ENCODE measurements at regions of chr1 and their contacts with region 1.

Region 1: GRCh38 chr1:232630047-232630893 is at the start of gene SIPA1L2:
- DNase-seq: peak; percentile 97
- H3K4me3 Mint-ChIP-seq: peak within 1 kb of the TSS; percentile 97
- H3K27ac Mint-ChIP-seq: peak within 1 kb of the TSS; percentile 76
- H3K4me1 Mint-ChIP-seq: peaks cover 33% of the 10 kb centered on the region
- H3K27me3 Mint-ChIP-seq: no peaks in the 10 kb centered on the region
- CTCF ChIP-seq: peak; percentile 72
- total RNA-seq, gene SIPA1L2: 15.2 and 18.3 TPM in 2 replicates

Region 2: DNA sequence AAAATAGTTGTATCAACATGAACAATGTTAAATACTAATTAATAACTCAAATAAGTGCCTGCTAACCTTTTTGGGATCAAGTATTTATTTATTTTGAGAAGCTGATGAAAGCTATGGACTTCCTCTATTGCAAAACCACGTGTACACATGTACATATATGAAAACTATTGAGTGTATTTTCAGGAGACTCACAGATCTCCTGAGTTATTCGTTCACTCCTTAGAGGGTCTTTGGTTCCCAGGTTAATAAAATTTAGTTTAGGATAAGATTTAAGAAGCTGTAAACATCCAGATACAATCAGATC is 873.2 kb before region 1 on chr1:
- CTCF ChIA-PET with region 1: interaction called, 60 read pairs
- POLR2A ChIA-PET with region 1: interaction called, 11 read pairs
- intact Hi-C with region 1: loop called (anchors 1 kb)
- DNase-seq: no peak
- H3K4me3 Mint-ChIP-seq: no peak overlapping the region
- H3K27ac Mint-ChIP-seq: peak overlapping the region; percentile 57
- H3K4me1 Mint-ChIP-seq: no peaks in the 10 kb centered on the region
- H3K27me3 Mint-ChIP-seq: no peaks in the 10 kb centered on the region
- CTCF ChIP-seq: no peak

Region 3: DNA sequence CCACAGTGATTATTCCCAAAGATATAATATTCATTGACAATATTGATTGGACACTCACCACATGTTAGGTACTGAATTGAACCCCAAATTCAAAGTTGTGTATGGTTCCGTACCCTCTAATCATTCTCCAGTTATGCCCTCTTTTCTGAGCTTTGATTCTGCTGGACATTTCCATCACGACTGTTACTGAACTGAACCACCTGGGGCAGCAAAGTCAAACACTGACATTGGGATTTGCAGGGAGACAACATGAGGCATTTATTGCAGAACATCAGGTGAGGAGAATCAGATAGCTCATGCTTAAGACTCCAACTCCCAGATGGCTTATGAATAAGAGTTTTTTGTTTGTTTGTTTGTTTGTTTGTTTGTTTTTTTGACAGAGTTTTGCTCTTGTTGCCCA is 582.8 kb before region 1 on chr1:
- CTCF ChIA-PET with region 1: interaction called, 4 read pairs
- POLR2A ChIA-PET with region 1: no interaction called
- intact Hi-C with region 1: loop called (anchors 5 kb)
- DNase-seq: peak; percentile 53
- H3K4me3 Mint-ChIP-seq: no peak overlapping the region
- H3K27ac Mint-ChIP-seq: no peak overlapping the region
- H3K4me1 Mint-ChIP-seq: peaks cover 6% of the 10 kb centered on the region
- H3K27me3 Mint-ChIP-seq: no peaks in the 10 kb centered on the region
- CTCF ChIP-seq: peak; percentile 22

Region 4: DNA sequence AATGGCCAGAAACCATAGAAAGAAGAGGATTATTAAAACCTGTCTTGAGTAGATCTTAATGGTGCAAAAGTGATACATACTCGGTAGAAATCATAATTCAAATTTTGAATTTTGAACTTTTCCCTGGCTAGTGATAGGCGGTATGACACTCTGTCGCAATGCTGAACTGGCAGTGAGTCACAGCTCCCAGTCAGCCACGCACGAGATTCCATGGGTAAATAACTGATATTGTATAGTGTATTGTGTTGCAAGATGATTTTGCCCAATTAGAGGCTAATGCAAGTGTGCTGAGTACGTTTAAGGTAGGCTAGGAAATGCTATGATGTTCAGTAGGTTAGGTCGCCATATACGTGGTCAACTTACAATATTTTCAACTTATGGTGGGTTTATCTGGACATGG is 207.4 kb before region 1 on chr1:
- CTCF ChIA-PET with region 1: interaction called, 11 read pairs
- POLR2A ChIA-PET with region 1: interaction called, 8 read pairs
- intact Hi-C with region 1: loop called (anchors 2 kb)
- DNase-seq: peak; percentile 94
- H3K4me3 Mint-ChIP-seq: no peak overlapping the region
- H3K27ac Mint-ChIP-seq: peak overlapping the region; percentile 81
- H3K4me1 Mint-ChIP-seq: peaks cover 27% of the 10 kb centered on the region
- H3K27me3 Mint-ChIP-seq: no peaks in the 10 kb centered on the region
- CTCF ChIP-seq: no peak

Region 5: GRCh38 chr1:232558954-232559353 is 71.3 kb before region 1 on chr1:
- CTCF ChIA-PET with region 1: interaction called, 17 read pairs
- POLR2A ChIA-PET with region 1: interaction called, 8 read pairs
- intact Hi-C with region 1: no loop called
- DNase-seq: no peak
- H3K4me3 Mint-ChIP-seq: no peak overlapping the region
- H3K27ac Mint-ChIP-seq: no peak overlapping the region
- H3K4me1 Mint-ChIP-seq: peaks cover 15% of the 10 kb centered on the region
- H3K27me3 Mint-ChIP-seq: no peaks in the 10 kb centered on the region
- CTCF ChIP-seq: no peak

Region 6: DNA sequence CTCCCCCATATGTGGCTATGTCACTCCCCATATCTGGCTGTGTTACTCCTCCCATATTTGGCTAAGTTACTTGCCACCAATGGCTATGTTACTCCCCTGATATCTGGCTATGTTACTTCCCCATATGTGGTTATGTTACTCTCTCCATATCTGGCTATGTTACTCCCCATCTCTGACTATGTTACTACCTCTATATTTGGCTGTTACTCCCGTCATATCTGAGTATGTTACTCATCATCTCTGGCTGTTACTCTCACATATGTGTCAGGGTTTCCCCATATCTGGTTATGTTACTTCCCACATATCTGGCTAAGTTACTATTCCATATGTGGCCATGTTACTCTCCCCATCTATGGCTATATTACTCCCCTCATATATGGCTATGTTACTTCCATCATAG is 124.7 kb after region 1 on chr1:
- CTCF ChIA-PET with region 1: no interaction called
- POLR2A ChIA-PET with region 1: no interaction called
- intact Hi-C with region 1: no loop called
- DNase-seq: no peak
- H3K4me3 Mint-ChIP-seq: no peak overlapping the region
- H3K27ac Mint-ChIP-seq: no peak overlapping the region
- H3K4me1 Mint-ChIP-seq: no peaks in the 10 kb centered on the region
- H3K27me3 Mint-ChIP-seq: no peaks in the 10 kb centered on the region
- CTCF ChIP-seq: no peak

Region 7: DNA sequence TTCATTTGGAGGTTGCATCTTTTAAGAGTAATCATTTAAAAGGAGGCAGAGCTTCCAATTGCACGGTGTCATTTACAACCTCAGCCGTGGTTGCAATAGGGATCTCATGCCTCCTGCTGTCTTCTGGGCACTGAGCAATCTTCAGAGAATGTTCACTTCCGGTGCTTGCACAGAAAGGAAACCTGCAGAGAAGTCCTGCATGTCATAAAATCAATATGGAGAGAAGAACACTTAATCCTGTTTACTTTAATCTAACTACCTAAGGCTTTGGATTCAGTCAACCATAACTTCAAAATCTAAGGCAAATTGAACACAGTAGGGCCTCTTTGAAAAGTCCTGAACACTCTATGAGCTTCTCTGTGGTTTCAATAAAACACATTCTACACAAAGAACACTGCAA is 163.7 kb after region 1 on chr1:
- CTCF ChIA-PET with region 1: interaction called, 30 read pairs
- POLR2A ChIA-PET with region 1: interaction called, 5 read pairs
- intact Hi-C with region 1: loop called (anchors 1 kb)
- DNase-seq: peak; percentile 86
- H3K4me3 Mint-ChIP-seq: no peak overlapping the region
- H3K27ac Mint-ChIP-seq: no peak overlapping the region
- H3K4me1 Mint-ChIP-seq: peaks cover 16% of the 10 kb centered on the region
- H3K27me3 Mint-ChIP-seq: no peaks in the 10 kb centered on the region
- CTCF ChIP-seq: peak; percentile 48

Region 8: DNA sequence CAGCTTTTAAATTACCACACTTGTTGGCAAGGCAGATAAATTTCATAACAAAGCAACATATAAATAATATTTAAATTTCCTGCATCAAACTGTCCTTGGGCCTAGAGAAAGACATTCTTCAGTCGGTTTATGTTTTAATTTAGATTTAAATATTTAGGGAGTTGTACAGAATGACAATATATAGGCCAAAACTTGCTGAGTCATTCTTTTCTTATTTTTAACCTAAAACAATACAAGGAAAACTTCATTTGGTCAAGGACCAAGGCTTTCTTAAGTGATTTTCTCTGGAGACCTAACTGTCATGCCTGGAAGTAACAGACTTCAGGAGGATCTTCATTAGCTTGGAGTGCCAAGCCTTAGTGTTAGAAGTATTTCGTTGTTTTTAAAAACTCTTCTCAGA is 180.6 kb after region 1 on chr1:
- CTCF ChIA-PET with region 1: no interaction called
- POLR2A ChIA-PET with region 1: no interaction called
- intact Hi-C with region 1: no loop called
- DNase-seq: no peak
- H3K4me3 Mint-ChIP-seq: no peak overlapping the region
- H3K27ac Mint-ChIP-seq: no peak overlapping the region
- H3K4me1 Mint-ChIP-seq: no peaks in the 10 kb centered on the region
- H3K27me3 Mint-ChIP-seq: peaks cover 16% of the 10 kb centered on the region
- CTCF ChIP-seq: no peak

Region 9: DNA sequence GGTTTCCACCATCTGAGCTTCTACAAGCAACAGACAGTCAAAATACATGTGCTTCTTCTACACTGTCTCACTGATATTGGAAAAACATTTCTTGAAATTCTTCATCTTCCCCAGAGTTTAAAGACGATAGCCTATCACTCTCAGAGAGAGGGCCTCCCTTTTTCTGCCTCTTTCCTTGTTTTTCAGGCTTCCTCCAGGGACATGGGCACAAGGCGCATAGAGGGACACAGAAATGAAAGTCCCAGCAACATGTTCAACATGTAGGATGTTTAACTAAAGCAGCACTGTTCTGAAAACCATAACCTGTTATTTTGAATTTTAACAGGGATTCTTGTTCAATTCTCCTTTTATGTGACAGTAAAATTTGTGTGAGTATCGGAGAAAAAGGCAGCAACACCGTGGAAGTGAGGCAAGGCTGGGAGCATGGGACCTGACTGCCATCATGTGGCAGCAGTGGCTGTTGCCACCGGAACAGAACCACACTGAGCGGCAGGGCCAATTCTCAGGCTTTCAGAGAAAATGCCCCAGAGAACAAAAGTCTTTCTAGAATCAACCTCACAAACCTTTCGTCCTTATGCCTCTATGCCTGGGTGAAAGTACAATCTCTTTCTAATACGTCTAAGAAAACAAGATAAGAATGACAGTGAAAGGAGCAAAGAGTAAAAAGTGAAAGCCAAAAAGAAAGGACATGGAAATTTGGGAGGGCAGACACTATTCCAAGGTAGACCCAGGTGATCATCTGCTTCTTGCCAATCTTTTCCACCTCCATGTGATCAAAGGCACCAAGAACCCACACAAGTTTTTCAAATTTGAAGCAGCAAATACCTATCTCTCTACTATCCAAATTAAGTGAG is 610.8 kb after region 1 on chr1:
- CTCF ChIA-PET with region 1: interaction called, 12 read pairs
- POLR2A ChIA-PET with region 1: interaction called, 4 read pairs
- intact Hi-C with region 1: loop called (anchors 1 kb)
- DNase-seq: peak; percentile 56
- H3K4me3 Mint-ChIP-seq: no peak overlapping the region
- H3K27ac Mint-ChIP-seq: peak overlapping the region; percentile 32
- H3K4me1 Mint-ChIP-seq: peaks cover 9% of the 10 kb centered on the region
- H3K27me3 Mint-ChIP-seq: no peaks in the 10 kb centered on the region
- CTCF ChIP-seq: peak; percentile 90

Measured in MCF 10A (cell line).